Right ventricle myocardium inferior (tissue), 1 donor: ENCODE measurements at regions of chr12 and their contacts with region 1.

Region 1: GRCh38 chr12:40152783-40153383 is 47.0 kb upstream of the SLC2A13 start:
- DNase-seq: peak; percentile 56
- ATAC-seq: no peak

Region 2: GRCh38 chr12:40034712-40035111 is 118.2 kb before region 1 on chr12:
- intact Hi-C with region 1: no loop called
- DNase-seq: no peak
- ATAC-seq: no peak

Region 3: GRCh38 chr12:40224439-40225291 is 71.8 kb after region 1 on chr12 and contains the start of gene LRRK2:
- intact Hi-C with region 1: loop called (anchors 2 kb)
- DNase-seq: peak; percentile 96
- ATAC-seq: peak; percentile 94
- total RNA-seq, gene LRRK2: 8.4 TPM

Region 4: DNA sequence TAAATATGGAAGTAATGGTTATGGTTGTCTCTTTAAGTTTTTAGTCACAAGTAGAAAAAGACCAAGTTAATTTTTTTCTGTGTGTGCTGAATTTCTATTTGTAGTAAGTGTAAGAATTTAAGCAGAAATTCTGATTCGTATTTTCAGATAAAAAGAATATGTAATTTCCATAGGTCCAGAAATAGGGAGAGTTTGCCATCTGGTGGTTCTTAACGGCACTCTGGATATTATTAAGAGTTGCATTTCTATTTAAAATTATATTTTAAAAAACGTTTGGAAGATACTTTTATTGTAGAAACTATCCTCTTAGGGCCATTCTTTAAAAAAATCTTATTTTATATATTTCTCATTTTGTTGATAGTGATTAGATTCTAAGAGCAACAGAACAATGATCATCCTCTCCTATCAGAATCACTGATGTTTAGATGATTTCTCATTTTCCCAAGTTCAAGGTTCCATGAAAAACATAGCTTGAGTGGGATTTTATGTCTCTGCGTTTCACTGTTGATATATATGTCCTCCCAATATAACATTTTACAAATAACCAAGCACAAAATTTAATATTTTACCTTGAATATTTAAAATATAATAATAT is 160.2 kb after region 1 on chr12:
- intact Hi-C with region 1: loop called (anchors 5 kb)
- DNase-seq: no peak
- ATAC-seq: no peak

Region 5: GRCh38 chr12:40325349-40325960 is 172.6 kb after region 1 on chr12:
- intact Hi-C with region 1: no loop called
- DNase-seq: no peak
- ATAC-seq: no peak

Region 6: DNA sequence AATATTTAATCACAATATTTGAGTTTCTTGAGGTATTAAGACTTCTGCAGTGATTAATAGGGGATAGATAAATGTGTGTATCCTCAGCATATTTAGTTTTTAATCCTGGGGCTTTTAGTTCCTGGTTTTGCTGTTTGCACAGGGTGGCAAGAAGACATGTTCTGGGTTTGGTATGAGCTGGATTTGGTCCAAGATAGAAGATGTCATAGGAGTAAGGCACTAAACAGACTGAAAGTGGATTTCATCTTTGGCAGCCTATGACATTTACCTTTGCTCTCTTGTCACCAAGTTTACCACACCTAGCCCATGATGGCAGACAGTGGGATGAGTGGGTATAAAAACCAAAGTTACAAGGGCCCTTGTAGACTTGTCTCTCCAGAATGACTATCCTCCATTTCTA is 240.1 kb after region 1 on chr12:
- intact Hi-C with region 1: no loop called
- DNase-seq: no peak
- ATAC-seq: no peak

Region 7: GRCh38 chr12:40921563-40922163 is 768.8 kb after region 1 on chr12:
- intact Hi-C with region 1: loop called (anchors 10 kb)
- DNase-seq: no peak
- ATAC-seq: no peak